ENCODE measurements at regions of chr13 and their contacts with region 1.

Region 1: DNA sequence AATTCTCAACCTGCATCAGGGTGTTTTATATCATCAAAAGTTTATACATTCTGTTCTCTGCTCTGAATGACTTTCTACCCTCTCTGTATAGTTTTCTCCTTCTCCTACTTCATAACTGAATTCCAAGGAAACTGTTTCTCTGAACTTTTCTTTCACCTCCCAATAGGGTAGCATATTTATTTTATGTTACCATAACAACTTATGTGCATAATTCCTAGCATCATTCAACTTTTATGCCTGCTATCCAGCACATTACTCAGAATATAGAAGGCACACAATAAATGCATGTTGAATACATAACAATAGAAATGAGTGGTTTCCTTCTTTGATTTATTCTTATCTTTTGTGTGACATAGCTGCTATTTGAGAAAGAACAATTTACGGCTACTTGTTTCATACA is 2385.0 kb downstream of the PCDH9 start:
- DNase-seq: no peak
- ATAC-seq: no peak
- H3K4me3 ChIP-seq: no peak overlapping the region
- H3K27ac ChIP-seq: no peak overlapping the region
- H3K4me1 ChIP-seq: no peaks in the 10 kb centered on the region
- H3K27me3 ChIP-seq: no peaks in the 10 kb centered on the region
- CTCF ChIP-seq: no peak

Region 2: GRCh38 chr13:64778002-64778401 is 67.1 kb before region 1 on chr13:
- CTCF ChIA-PET with region 1: no interaction called
- POLR2A ChIA-PET with region 1: no interaction called
- in situ Hi-C with region 1: no loop called
- intact Hi-C with region 1: no loop called
- DNase-seq: no peak
- ATAC-seq: no peak
- H3K4me3 ChIP-seq: no peak overlapping the region
- H3K27ac ChIP-seq: no peak overlapping the region
- H3K4me1 ChIP-seq: no peaks in the 10 kb centered on the region
- H3K27me3 ChIP-seq: no peaks in the 10 kb centered on the region
- CTCF ChIP-seq: no peak

Region 3: DNA sequence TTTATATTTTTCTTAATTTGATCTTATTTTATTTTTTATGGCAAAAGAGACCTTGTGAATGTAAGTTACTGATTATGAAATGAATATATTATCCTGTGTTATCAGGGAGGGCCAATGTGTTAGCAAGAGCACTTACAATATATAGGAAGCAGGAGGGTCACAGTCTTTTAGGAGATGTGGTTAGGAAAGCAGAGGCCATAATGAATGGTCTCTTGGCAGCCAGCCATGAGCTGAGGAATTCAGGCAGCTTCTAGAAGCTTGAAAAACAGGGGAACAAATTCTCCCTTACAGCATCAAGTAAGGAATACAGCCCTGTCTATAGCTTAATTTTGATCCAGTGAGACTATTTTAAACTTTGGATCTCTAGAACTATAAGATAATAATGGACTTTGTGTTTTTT is 10.4 kb after region 1 on chr13:
- CTCF ChIA-PET with region 1: no interaction called
- POLR2A ChIA-PET with region 1: interaction called, 13 read pairs
- in situ Hi-C with region 1: no loop called
- intact Hi-C with region 1: no loop called
- DNase-seq: no peak
- ATAC-seq: no peak
- H3K4me3 ChIP-seq: no peak overlapping the region
- H3K27ac ChIP-seq: no peak overlapping the region
- H3K4me1 ChIP-seq: no peaks in the 10 kb centered on the region
- H3K27me3 ChIP-seq: no peaks in the 10 kb centered on the region
- CTCF ChIP-seq: no peak

Region 4: GRCh38 chr13:65260946-65261891 is 416.1 kb after region 1 on chr13:
- CTCF ChIA-PET with region 1: no interaction called
- POLR2A ChIA-PET with region 1: no interaction called
- in situ Hi-C with region 1: no loop called
- intact Hi-C with region 1: no loop called
- DNase-seq: no peak
- ATAC-seq: no peak
- H3K4me3 ChIP-seq: no peak overlapping the region
- H3K27ac ChIP-seq: no peak overlapping the region
- H3K4me1 ChIP-seq: no peaks in the 10 kb centered on the region
- H3K27me3 ChIP-seq: no peaks in the 10 kb centered on the region
- CTCF ChIP-seq: no peak

Measured in Panc1 (cell line).